Naive thymus-derived CD4-positive, alpha-beta T cell (primary cell): ENCODE measurements at regions of chr15 and their contacts with region 1.

Region 1: GRCh38 chr15:55196458-55197361 is at the start of gene RSL24D1:
- DNase-seq: peak; percentile 83 to 98 (median 95)
- ATAC-seq: peak; percentile 98
- H3K4me3 ChIP-seq: peak within 1 kb of the TSS; percentile 93
- H3K4me3 Mint-ChIP-seq: no peak within 1 kb of the TSS
- H3K27ac ChIP-seq: peak within 1 kb of the TSS; percentile 89
- H3K27ac Mint-ChIP-seq: no peak within 1 kb of the TSS
- H3K4me1 ChIP-seq: peaks cover 29 to 39% of the 10 kb centered on the region in 2 donors
- H3K4me1 Mint-ChIP-seq: peaks cover 0 to 24% (median 21%) of the 10 kb centered on the region in 7 donors
- H3K27me3 ChIP-seq: no peaks in the 10 kb centered on the region
- H3K27me3 Mint-ChIP-seq: no peaks in the 10 kb centered on the region
- total RNA-seq, gene RSL24D1: 75.9 to 128 (median 110) TPM

Region 2: GRCh38 chr15:55074431-55074830 is 122.3 kb before region 1 on chr15:
- CTCF ChIA-PET with region 1: no interaction called
- POLR2A ChIA-PET with region 1: no interaction called
- intact Hi-C with region 1: loop called in 1 of 2 experiments (anchors 1 kb)
- DNase-seq: no peak
- ATAC-seq: no peak
- H3K4me3 ChIP-seq: no peak overlapping the region
- H3K4me3 Mint-ChIP-seq: no peak overlapping the region
- H3K27ac ChIP-seq: no peak overlapping the region
- H3K27ac Mint-ChIP-seq: no peak overlapping the region
- H3K4me1 ChIP-seq: peaks cover 0 to 13% of the 10 kb centered on the region in 2 donors
- H3K4me1 Mint-ChIP-seq: peaks cover 3 to 31% (median 21%) of the 10 kb centered on the region in 7 donors
- H3K27me3 ChIP-seq: no peaks in the 10 kb centered on the region
- H3K27me3 Mint-ChIP-seq: peaks cover 0 to 3% (median 0%) of the 10 kb centered on the region in 5 donors

Region 3: GRCh38 chr15:55221090-55222011 is 24.6 kb after region 1 on chr15:
- CTCF ChIA-PET with region 1: interaction called, 5 read pairs
- POLR2A ChIA-PET with region 1: interaction called, 11 read pairs
- intact Hi-C with region 1: loop called (anchors 1 to 2 kb)
- DNase-seq: peak in 1 of 9 donors; percentile 26
- ATAC-seq: peak; percentile 48
- H3K4me3 ChIP-seq: no peak overlapping the region
- H3K4me3 Mint-ChIP-seq: peak overlapping the region in 5 of 10 donors; percentile 17 to 69 (median 38)
- H3K27ac ChIP-seq: no peak overlapping the region
- H3K27ac Mint-ChIP-seq: peak overlapping the region in 5 of 9 donors; percentile 11 to 87 (median 38)
- H3K4me1 ChIP-seq: peaks cover 43 to 54% of the 10 kb centered on the region in 2 donors
- H3K4me1 Mint-ChIP-seq: peaks cover 44 to 71% (median 51%) of the 10 kb centered on the region in 7 donors
- H3K27me3 ChIP-seq: no peaks in the 10 kb centered on the region
- H3K27me3 Mint-ChIP-seq: no peaks in the 10 kb centered on the region

Region 4: DNA sequence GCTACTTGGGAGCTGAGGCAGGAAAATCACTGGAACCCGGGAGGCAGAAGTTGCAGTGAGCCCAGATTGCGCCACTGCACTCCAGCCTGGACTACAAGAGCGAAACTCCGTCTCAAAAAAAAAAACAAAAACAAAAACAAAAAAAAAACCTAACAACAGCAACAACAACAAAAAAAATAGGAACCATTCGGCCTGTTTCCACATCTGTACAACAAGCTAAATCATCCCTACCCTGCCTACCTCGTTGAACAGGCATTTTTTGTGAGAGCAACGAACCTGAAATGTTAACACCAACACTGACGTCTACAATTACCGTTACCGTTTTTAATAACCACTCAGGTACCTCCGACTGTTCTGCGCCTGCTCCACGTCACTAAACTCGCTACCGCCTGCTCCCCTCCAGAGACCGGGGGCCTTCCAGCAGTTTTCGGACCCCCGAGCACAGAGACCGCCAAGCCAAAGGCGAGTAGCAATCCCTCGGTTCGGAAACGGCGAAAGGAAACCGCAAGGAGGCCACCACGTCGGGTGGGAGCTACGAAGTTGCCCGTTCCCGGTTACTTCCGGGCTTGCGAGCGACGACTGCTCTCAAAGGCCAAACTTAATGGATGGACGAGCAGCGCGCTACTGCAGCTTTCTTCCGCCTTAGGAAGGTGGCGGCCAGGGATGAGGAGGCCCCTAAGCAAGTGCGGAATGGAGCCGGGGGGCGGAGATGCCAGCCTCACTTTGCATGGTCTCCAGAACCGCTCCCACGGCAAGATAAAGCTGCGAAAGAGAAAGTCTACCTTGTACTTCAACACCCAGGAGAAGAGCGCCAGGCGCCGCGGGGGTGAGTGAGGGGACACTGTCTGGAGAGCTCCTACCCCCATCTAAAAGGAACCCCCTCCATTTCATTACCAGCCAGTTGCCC is 122.1 kb after region 1 on chr15 and contains the starts of genes PIGB and PIGBOS1:
- CTCF ChIA-PET with region 1: interaction called, 3 read pairs
- POLR2A ChIA-PET with region 1: interaction called, 25 read pairs
- intact Hi-C with region 1: loop called (anchors 1 kb)
- DNase-seq: peak; percentile 73 to 88 (median 84)
- ATAC-seq: peak; percentile 91
- H3K4me3 ChIP-seq: peak within 1 kb of the TSS; percentile 95
- H3K4me3 Mint-ChIP-seq: peak within 1 kb of the TSS; percentile 98 to 99 (median 98)
- H3K27ac ChIP-seq: peak within 1 kb of the TSS; percentile 98
- H3K27ac Mint-ChIP-seq: peak within 1 kb of the TSS; percentile 99 to 100 (median 100)
- H3K4me1 ChIP-seq: peaks cover 5 to 28% of the 10 kb centered on the region in 2 donors
- H3K4me1 Mint-ChIP-seq: peaks cover 41 to 86% (median 76%) of the 10 kb centered on the region in 7 donors
- H3K27me3 ChIP-seq: no peaks in the 10 kb centered on the region
- H3K27me3 Mint-ChIP-seq: no peaks in the 10 kb centered on the region
- total RNA-seq, gene PIGB: 21.4 to 30.2 (median 24.3) TPM
- total RNA-seq, gene PIGBOS1: 8.8 to 21.3 (median 12.5) TPM

Region 5: GRCh38 chr15:55348281-55348778 is 151.6 kb after region 1 on chr15:
- CTCF ChIA-PET with region 1: no interaction called
- POLR2A ChIA-PET with region 1: no interaction called
- intact Hi-C with region 1: no loop called
- DNase-seq: no peak
- ATAC-seq: no peak
- H3K4me3 ChIP-seq: no peak overlapping the region
- H3K4me3 Mint-ChIP-seq: no peak overlapping the region
- H3K27ac ChIP-seq: no peak overlapping the region
- H3K27ac Mint-ChIP-seq: peak overlapping the region in 2 of 9 donors; percentile 28 to 57
- H3K4me1 ChIP-seq: no peaks in the 10 kb centered on the region
- H3K4me1 Mint-ChIP-seq: no peaks in the 10 kb centered on the region
- H3K27me3 ChIP-seq: no peaks in the 10 kb centered on the region
- H3K27me3 Mint-ChIP-seq: no peaks in the 10 kb centered on the region

Region 6: DNA sequence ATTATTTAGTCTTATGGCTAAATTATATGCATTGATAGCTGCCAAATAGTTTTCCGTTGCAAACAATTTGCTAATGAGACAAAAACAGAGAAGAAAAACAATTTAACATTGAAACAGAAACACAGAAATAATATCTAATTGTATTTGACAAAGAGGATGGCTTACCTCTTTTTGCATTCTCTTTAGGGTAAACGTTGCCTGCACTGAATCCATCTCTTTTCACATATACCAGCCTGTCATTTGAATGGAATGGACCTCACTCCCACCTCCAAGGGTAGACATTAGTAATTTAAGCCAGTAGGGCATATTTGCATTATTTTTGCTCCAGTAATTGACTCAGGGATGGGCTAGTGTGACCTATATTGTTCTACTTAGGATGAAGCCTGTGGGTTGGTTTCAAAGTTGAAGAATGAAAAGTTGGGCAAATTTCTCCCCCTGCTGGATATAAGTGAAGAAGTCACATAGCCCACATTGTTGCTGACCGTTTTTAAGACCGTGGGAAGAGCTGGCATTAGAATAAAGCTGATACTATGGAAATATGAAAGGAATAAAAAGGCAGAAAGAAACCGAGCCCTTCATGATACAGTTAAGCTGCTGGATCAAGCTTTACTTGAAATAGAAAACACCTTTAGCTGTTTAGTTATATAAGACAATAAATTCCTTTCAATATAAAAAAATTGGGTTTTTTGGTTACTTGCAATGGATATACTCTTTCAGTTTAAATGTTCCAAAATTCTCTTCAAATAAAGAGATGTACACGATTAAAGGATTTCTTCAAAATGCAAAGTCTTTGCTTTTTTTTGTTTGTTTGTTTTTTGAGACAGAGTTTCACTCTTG is 238.5 kb after region 1 on chr15:
- CTCF ChIA-PET with region 1: no interaction called
- POLR2A ChIA-PET with region 1: no interaction called
- intact Hi-C with region 1: loop called in 1 of 2 experiments (anchors 5 kb)
- DNase-seq: peak in 5 of 9 donors; percentile 30 to 43 (median 33)
- ATAC-seq: peak; percentile 68
- H3K4me3 ChIP-seq: no peak overlapping the region
- H3K4me3 Mint-ChIP-seq: no peak overlapping the region
- H3K27ac ChIP-seq: no peak overlapping the region
- H3K27ac Mint-ChIP-seq: no peak overlapping the region
- H3K4me1 ChIP-seq: no peaks in the 10 kb centered on the region
- H3K4me1 Mint-ChIP-seq: peaks cover 0 to 10% (median 5%) of the 10 kb centered on the region in 7 donors
- H3K27me3 ChIP-seq: no peaks in the 10 kb centered on the region
- H3K27me3 Mint-ChIP-seq: peaks cover 0 to 4% (median 0%) of the 10 kb centered on the region in 5 donors

Region 7: GRCh38 chr15:55993111-55993803 is 796.5 kb after region 1 on chr15 and contains the start of gene NEDD4:
- CTCF ChIA-PET with region 1: no interaction called
- POLR2A ChIA-PET with region 1: no interaction called
- intact Hi-C with region 1: loop called in 1 of 2 experiments (anchors 5 kb)
- DNase-seq: peak; percentile 60 to 80 (median 68)
- ATAC-seq: peak; percentile 93
- H3K4me3 ChIP-seq: peak within 1 kb of the TSS; percentile 66
- H3K4me3 Mint-ChIP-seq: peak within 1 kb of the TSS; percentile 85 to 95 (median 90)
- H3K27ac ChIP-seq: no peak within 1 kb of the TSS
- H3K27ac Mint-ChIP-seq: peak within 1 kb of the TSS; percentile 7 to 92 (median 68)
- H3K4me1 ChIP-seq: no peaks in the 10 kb centered on the region
- H3K4me1 Mint-ChIP-seq: peaks cover 8 to 26% (median 18%) of the 10 kb centered on the region in 7 donors
- H3K27me3 ChIP-seq: no peaks in the 10 kb centered on the region
- H3K27me3 Mint-ChIP-seq: peaks cover 0 to 52% (median 0%) of the 10 kb centered on the region in 5 donors
- total RNA-seq, gene NEDD4: 3.3 to 15.1 (median 5.4) TPM